GM12878 (cell line): ENCODE measurements at regions of chr1 and their contacts with region 1.

Region 1: GRCh38 chr1:110986407-110986891 is 22.7 kb upstream of the LRIF1 start:
- DNase-seq: no peak
- ATAC-seq: no peak
- H3K4me3 ChIP-seq: no peak overlapping the region
- H3K27ac ChIP-seq: no peak overlapping the region
- H3K4me1 ChIP-seq: no peaks in the 10 kb centered on the region
- H3K27me3 ChIP-seq: no peaks in the 10 kb centered on the region
- CTCF ChIP-seq: no peak
- EP300 ChIP-seq: no peak
- POLR2A ChIP-seq: no peak
- RAD21 ChIP-seq: no peak

Region 2: DNA sequence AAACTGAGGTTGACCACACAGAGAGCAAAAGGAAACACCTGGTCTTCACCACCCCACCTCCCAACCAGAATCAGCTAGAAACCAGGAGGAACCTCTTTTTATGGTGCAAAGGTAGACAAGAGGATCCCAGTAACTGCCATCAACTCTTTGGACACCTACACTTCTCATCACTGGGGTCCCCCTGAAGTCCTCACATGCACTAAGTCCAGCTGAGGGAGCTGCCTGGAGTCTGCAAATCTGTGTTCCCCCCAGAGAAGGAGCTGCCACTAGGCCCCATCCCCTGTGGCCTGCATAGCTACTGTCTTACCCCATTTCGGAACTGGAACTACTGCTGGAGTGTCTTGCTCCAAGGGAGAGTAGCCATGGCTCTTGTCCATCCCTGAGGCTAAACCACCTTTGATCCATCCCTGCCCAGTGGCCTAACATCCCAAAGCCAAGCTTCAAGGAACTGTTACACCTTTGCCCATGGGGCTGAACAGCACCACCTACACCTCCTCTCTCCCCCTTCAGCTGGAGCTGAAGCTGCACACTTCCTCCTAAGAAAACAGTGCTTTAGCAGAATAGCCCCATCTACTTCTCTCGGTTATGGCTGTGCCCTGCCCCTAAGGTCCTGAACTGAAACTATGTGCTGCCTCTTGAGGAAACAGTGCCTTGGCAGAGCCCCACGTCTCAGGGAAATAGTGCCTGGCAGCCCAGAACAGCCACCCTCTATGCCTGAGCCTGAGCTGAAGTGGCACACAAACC is 198.9 kb before region 1 on chr1:
- CTCF ChIA-PET with region 1: interaction called, 68 read pairs
- POLR2A ChIA-PET with region 1: no interaction called
- RAD21 ChIA-PET with region 1: no interaction called
- SMC1A ChIA-PET with region 1: interaction called, 23 read pairs
- in situ Hi-C with region 1: loop called (anchors 5 kb)
- intact Hi-C with region 1: no loop called
- DNase-seq: peak; percentile 76
- ATAC-seq: peak; percentile 83
- H3K4me3 ChIP-seq: no peak overlapping the region
- H3K27ac ChIP-seq: peak overlapping the region; percentile 98
- H3K4me1 ChIP-seq: peaks cover 29% of the 10 kb centered on the region
- H3K27me3 ChIP-seq: no peaks in the 10 kb centered on the region
- CTCF ChIP-seq: no peak
- EP300 ChIP-seq: no peak
- POLR2A ChIP-seq: no peak
- RAD21 ChIP-seq: no peak

Region 3: GRCh38 chr1:111006541-111006940 is 20.1 kb after region 1 on chr1:
- CTCF ChIA-PET with region 1: interaction called, 13 read pairs
- POLR2A ChIA-PET with region 1: no interaction called
- RAD21 ChIA-PET with region 1: no interaction called
- SMC1A ChIA-PET with region 1: no interaction called
- in situ Hi-C with region 1: no loop called
- intact Hi-C with region 1: no loop called
- DNase-seq: no peak
- ATAC-seq: no peak
- H3K4me3 ChIP-seq: no peak overlapping the region
- H3K27ac ChIP-seq: no peak overlapping the region
- H3K4me1 ChIP-seq: no peaks in the 10 kb centered on the region
- H3K27me3 ChIP-seq: no peaks in the 10 kb centered on the region
- CTCF ChIP-seq: no peak
- EP300 ChIP-seq: no peak
- POLR2A ChIP-seq: no peak
- RAD21 ChIP-seq: no peak